ENCODE measurements at regions of chr20 and their contacts with region 1.

Region 1: DNA sequence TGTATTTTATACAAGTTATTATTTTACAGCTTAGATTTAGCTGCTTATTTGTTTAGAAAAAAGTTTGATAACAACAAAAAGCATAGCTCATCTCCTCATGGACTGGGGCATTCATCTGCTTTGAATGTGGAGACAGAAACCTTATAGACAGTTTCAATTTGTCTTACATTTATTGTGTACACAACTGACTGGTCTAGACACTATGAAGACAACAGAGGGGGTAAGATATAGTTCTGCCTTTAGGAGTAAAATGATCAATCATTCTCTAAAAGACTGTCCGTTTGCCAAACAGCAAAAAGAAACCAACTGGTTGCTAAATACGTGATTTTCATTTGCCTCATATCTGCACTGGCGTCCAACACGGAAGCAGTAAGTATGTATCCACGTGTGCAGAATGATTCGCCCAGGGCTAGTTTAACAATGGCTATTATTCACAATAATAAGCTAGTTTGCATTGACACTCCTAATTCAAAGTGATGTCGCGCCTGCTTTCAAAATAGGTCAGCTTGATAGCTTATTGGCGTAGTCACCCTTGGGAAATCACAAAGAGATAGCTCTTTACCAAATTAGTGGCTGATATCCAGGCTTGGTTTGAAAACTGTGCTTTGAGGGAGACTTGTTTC is 153.6 kb downstream of the BMP2 start:
- DNase-seq: no peak
- ATAC-seq: peak; percentile 66
- H3K4me3 ChIP-seq: no peak overlapping the region
- H3K27ac ChIP-seq: no peak overlapping the region
- H3K4me1 ChIP-seq: no peaks in the 10 kb centered on the region
- H3K27me3 ChIP-seq: no peaks in the 10 kb centered on the region
- CTCF ChIP-seq: no peak
- EP300 ChIP-seq: peak in 1 of 2 experiments; percentile 46; a peak in 1 of 4 replicates
- POLR2A ChIP-seq: no peak
- RAD21 ChIP-seq: no peak

Region 2: GRCh38 chr20:6784210-6784611 is 136.9 kb before region 1 on chr20:
- CTCF ChIA-PET with region 1: no interaction called
- POLR2A ChIA-PET with region 1: no interaction called
- RAD21 ChIA-PET with region 1: no interaction called
- SMC1A ChIA-PET with region 1: no interaction called
- in situ Hi-C with region 1: no loop called
- intact Hi-C with region 1: no loop called
- DNase-seq: no peak
- ATAC-seq: peak; percentile 47
- H3K4me3 ChIP-seq: no peak overlapping the region
- H3K27ac ChIP-seq: no peak overlapping the region
- H3K4me1 ChIP-seq: no peaks in the 10 kb centered on the region
- H3K27me3 ChIP-seq: no peaks in the 10 kb centered on the region
- CTCF ChIP-seq: no peak
- EP300 ChIP-seq: no peak
- POLR2A ChIP-seq: no peak
- RAD21 ChIP-seq: no peak

Region 3: DNA sequence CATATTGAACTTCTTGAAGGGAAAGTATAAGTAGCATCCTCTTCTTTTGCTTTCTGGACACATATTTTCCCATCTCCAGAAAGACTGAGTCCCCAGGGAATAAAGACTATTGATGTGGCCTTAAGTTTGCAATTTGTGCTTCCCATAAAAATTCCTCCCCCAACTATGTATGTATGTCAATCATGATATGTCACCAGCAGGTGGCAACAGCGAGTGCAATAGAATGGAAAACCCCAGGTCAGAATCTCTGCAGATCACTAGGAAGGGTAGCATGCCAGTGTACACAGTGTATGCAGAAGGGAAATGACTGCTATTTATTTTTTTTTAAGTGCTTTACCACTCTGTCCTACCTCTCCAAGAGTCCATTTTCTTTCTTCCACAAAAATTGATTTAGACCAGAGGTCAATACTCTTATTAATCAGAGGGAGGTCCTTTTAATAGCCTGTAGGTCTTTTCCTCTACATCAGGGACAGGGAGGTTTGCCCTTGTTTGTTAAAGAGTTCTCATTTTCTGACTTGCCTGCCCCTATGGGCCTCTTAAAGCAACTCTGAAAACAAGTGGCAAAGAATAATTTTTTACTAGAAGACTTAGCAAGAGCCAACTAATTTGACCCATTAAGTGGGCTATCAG is 92.2 kb before region 1 on chr20:
- CTCF ChIA-PET with region 1: interaction called, 34 read pairs
- POLR2A ChIA-PET with region 1: interaction called, 4 read pairs
- RAD21 ChIA-PET with region 1: interaction called, 9 read pairs
- SMC1A ChIA-PET with region 1: interaction called, 54 read pairs
- in situ Hi-C with region 1: no loop called
- intact Hi-C with region 1: no loop called
- DNase-seq: peak; percentile 30
- ATAC-seq: peak; percentile 92
- H3K4me3 ChIP-seq: no peak overlapping the region
- H3K27ac ChIP-seq: no peak overlapping the region
- H3K4me1 ChIP-seq: no peaks in the 10 kb centered on the region
- H3K27me3 ChIP-seq: no peaks in the 10 kb centered on the region; a peak in 1 of 4 replicates
- CTCF ChIP-seq: peak; percentile 57 to 72 (median 63)
- EP300 ChIP-seq: no peak
- POLR2A ChIP-seq: no peak
- RAD21 ChIP-seq: peak; percentile 75

Region 4: DNA sequence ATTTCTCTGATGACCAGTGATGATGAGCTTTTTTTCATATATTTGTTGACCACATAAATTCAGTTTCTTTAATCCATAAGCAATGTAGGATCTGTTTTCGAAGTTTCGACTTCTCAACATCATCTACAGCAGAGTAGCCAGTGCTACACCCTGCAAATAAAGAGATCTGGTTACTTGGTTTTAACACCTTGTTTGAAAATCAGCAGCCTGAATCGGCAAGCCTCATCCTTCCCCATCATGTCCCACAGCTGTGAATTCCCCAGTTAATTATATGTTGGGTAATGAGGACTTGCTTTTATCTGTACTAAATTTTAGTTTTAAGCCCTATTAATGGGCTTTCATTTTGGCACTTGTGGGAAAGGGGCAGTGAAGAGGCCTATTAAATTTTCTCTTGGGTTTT is 73.1 kb before region 1 on chr20:
- CTCF ChIA-PET with region 1: interaction called, 4 read pairs
- POLR2A ChIA-PET with region 1: interaction called, 100 read pairs
- RAD21 ChIA-PET with region 1: interaction called, 70 read pairs
- SMC1A ChIA-PET with region 1: interaction called, 370 read pairs
- in situ Hi-C with region 1: no loop called
- intact Hi-C with region 1: no loop called
- DNase-seq: no peak
- ATAC-seq: peak; percentile 62
- H3K4me3 ChIP-seq: no peak overlapping the region
- H3K27ac ChIP-seq: no peak overlapping the region
- H3K4me1 ChIP-seq: no peaks in the 10 kb centered on the region
- H3K27me3 ChIP-seq: no peaks in the 10 kb centered on the region
- CTCF ChIP-seq: no peak
- EP300 ChIP-seq: peak; percentile 28 to 51; a peak in 1 of 4 replicates
- POLR2A ChIP-seq: no peak
- RAD21 ChIP-seq: no peak

Region 5: DNA sequence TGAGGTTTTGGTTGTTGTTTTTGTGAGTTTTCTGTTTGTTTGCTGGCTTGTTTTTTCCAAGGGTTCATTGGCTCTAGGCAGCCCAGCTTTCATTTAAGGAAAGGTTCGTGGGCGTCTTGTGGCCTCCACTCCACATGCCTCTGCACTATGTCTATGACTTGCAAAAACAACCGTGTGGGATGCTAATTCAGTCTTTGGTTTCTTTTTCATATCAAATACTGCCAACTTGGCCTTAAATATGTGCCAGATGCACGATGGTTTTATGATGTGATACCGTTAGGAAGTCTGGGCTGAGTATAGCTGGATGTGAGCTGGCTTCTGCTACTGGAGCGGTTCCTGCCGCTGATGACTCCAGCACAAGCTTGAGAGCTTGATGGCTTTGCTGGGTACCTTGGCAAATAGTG is 57.3 kb before region 1 on chr20:
- CTCF ChIA-PET with region 1: interaction called, 5 read pairs
- POLR2A ChIA-PET with region 1: interaction called, 46 read pairs
- RAD21 ChIA-PET with region 1: interaction called, 93 read pairs
- SMC1A ChIA-PET with region 1: interaction called, 370 read pairs
- in situ Hi-C with region 1: no loop called
- intact Hi-C with region 1: no loop called
- DNase-seq: no peak
- ATAC-seq: peak; percentile 60
- H3K4me3 ChIP-seq: no peak overlapping the region
- H3K27ac ChIP-seq: no peak overlapping the region
- H3K4me1 ChIP-seq: no peaks in the 10 kb centered on the region
- H3K27me3 ChIP-seq: no peaks in the 10 kb centered on the region
- CTCF ChIP-seq: no peak
- EP300 ChIP-seq: no peak
- POLR2A ChIP-seq: no peak
- RAD21 ChIP-seq: no peak

Region 6: GRCh38 chr20:6882561-6883280 is 38.4 kb before region 1 on chr20:
- CTCF ChIA-PET with region 1: interaction called, 14 read pairs
- POLR2A ChIA-PET with region 1: interaction called, 9 read pairs
- RAD21 ChIA-PET with region 1: interaction called, 75 read pairs
- SMC1A ChIA-PET with region 1: interaction called, 203 read pairs
- in situ Hi-C with region 1: no loop called
- intact Hi-C with region 1: no loop called
- DNase-seq: no peak
- ATAC-seq: peak; percentile 25; the same call in 2 of the 3 replicates
- H3K4me3 ChIP-seq: no peak overlapping the region
- H3K27ac ChIP-seq: no peak overlapping the region
- H3K4me1 ChIP-seq: no peaks in the 10 kb centered on the region
- H3K27me3 ChIP-seq: no peaks in the 10 kb centered on the region
- CTCF ChIP-seq: no peak
- EP300 ChIP-seq: no peak
- POLR2A ChIP-seq: no peak
- RAD21 ChIP-seq: no peak

Region 7: DNA sequence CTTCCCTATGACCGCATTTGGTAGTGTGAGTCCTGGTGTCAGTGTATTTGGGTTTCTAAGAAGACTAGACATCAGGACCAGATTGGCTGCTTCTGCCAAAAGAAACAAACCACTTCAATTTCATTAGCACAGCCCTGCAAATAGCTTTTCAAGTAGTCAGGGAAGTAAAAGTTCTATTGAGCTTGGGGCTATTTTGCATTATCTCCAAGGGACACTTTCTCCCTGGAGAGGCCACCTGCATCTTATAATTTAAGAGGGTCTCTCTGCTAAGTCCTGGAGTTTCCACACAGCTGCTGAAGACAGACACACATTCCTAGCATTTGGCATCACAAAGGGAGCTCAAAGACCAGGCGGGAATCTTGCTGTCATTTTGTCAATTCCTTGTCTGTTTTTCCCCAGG is 12.4 kb before region 1 on chr20:
- CTCF ChIA-PET with region 1: interaction called, 12 read pairs
- POLR2A ChIA-PET with region 1: interaction called, 12 read pairs
- RAD21 ChIA-PET with region 1: interaction called, 30 read pairs
- SMC1A ChIA-PET with region 1: interaction called, 171 read pairs
- in situ Hi-C with region 1: no loop called
- intact Hi-C with region 1: no loop called
- DNase-seq: no peak
- ATAC-seq: no peak
- H3K4me3 ChIP-seq: no peak overlapping the region
- H3K27ac ChIP-seq: no peak overlapping the region
- H3K4me1 ChIP-seq: no peaks in the 10 kb centered on the region
- H3K27me3 ChIP-seq: no peaks in the 10 kb centered on the region
- CTCF ChIP-seq: no peak
- EP300 ChIP-seq: no peak
- POLR2A ChIP-seq: no peak
- RAD21 ChIP-seq: no peak

Region 8: GRCh38 chr20:6994452-6994851 is 73.3 kb after region 1 on chr20:
- CTCF ChIA-PET with region 1: interaction called, 3 read pairs
- POLR2A ChIA-PET with region 1: interaction called, 4 read pairs
- RAD21 ChIA-PET with region 1: interaction called, 7 read pairs
- SMC1A ChIA-PET with region 1: interaction called, 11 read pairs
- in situ Hi-C with region 1: no loop called
- intact Hi-C with region 1: no loop called
- DNase-seq: no peak
- ATAC-seq: no peak; the same call in 2 of the 3 replicates
- H3K4me3 ChIP-seq: no peak overlapping the region
- H3K27ac ChIP-seq: no peak overlapping the region
- H3K4me1 ChIP-seq: no peaks in the 10 kb centered on the region
- H3K27me3 ChIP-seq: no peaks in the 10 kb centered on the region
- CTCF ChIP-seq: no peak
- EP300 ChIP-seq: no peak
- POLR2A ChIP-seq: no peak
- RAD21 ChIP-seq: no peak